Activated CD8-positive, alpha-beta T cell treated with anti-CD3 and anti-CD28 coated beads for 36 hours (primary cell): ENCODE measurements at regions of chr10 and their contacts with region 1.

Region 1: GRCh38 chr10:99560277-99561126 is 27.8 kb downstream of the NKX2-3 start:
- DNase-seq: peak; percentile 43
- ATAC-seq: no peak
- H3K4me3 Mint-ChIP-seq: no peak overlapping the region
- H3K27ac Mint-ChIP-seq: no peak overlapping the region
- H3K4me1 Mint-ChIP-seq: peaks cover 11% of the 10 kb centered on the region
- H3K27me3 Mint-ChIP-seq: peaks cover 19% of the 10 kb centered on the region
- CTCF ChIP-seq: peak; percentile 88

Region 2: GRCh38 chr10:99573790-99574189 is 13.3 kb after region 1 on chr10:
- CTCF ChIA-PET with region 1: interaction called, 11 read pairs
- POLR2A ChIA-PET with region 1: no interaction called
- intact Hi-C with region 1: no loop called
- DNase-seq: no peak
- ATAC-seq: no peak
- H3K4me3 Mint-ChIP-seq: no peak overlapping the region
- H3K27ac Mint-ChIP-seq: no peak overlapping the region
- H3K4me1 Mint-ChIP-seq: no peaks in the 10 kb centered on the region
- H3K27me3 Mint-ChIP-seq: peaks cover 13% of the 10 kb centered on the region
- CTCF ChIP-seq: no peak